MCF 10A (cell line): ENCODE measurements at regions of chr16 and their contacts with region 1.

Region 1: GRCh38 chr16:28211712-28212534 is at the start of gene XPO6:
- DNase-seq: peak; percentile 90
- H3K4me3 Mint-ChIP-seq: peak within 1 kb of the TSS; percentile 80
- H3K27ac Mint-ChIP-seq: no peak within 1 kb of the TSS
- H3K4me1 Mint-ChIP-seq: peaks cover 21% of the 10 kb centered on the region
- H3K27me3 Mint-ChIP-seq: no peaks in the 10 kb centered on the region
- CTCF ChIP-seq: no peak
- total RNA-seq, gene XPO6: 184 and 200 TPM in 2 replicates

Region 2: DNA sequence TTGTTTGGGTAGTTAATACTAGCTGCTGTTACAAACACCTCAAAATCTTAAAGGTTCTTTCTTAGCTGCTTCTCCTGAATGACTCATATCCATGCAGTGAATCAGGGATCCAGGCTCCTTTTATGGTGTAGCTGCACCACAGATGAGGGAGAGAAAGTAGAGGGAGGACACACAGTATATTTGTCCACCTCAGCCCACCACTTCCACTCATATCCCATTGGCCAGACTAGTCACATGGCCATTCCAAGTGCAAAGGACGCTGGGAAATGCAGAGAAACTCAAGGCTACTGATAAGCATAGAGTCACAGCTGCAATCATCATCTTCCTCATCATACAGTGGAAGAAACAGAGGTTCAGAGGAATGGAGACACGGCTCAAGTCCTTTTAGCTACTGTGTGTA is 212.2 kb before region 1 on chr16:
- CTCF ChIA-PET with region 1: no interaction called
- POLR2A ChIA-PET with region 1: no interaction called
- intact Hi-C with region 1: no loop called
- DNase-seq: no peak
- H3K4me3 Mint-ChIP-seq: no peak overlapping the region
- H3K27ac Mint-ChIP-seq: no peak overlapping the region
- H3K4me1 Mint-ChIP-seq: no peaks in the 10 kb centered on the region
- H3K27me3 Mint-ChIP-seq: no peaks in the 10 kb centered on the region
- CTCF ChIP-seq: no peak

Region 3: DNA sequence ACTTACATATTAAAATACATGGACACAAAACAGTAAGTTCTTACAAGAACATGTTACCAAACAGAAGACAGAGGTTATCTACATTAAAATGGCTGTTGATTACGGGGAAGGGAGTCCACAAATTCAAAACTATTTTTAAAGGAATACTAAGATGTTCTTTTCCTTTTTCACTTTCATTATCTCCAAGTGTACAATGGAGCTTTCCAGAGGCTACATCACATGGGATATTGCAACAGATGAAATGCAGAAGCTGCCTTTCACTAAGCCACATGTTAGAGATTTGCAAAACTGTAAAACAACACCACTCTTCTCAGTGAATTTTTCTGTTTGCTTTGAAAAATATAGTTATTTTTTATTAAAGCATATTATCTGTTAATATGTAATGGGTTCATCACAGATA is 53.8 kb before region 1 on chr16:
- CTCF ChIA-PET with region 1: no interaction called
- POLR2A ChIA-PET with region 1: interaction called, 3 read pairs
- intact Hi-C with region 1: loop called (anchors 10 kb)
- DNase-seq: no peak
- H3K4me3 Mint-ChIP-seq: no peak overlapping the region
- H3K27ac Mint-ChIP-seq: peak overlapping the region; percentile 28
- H3K4me1 Mint-ChIP-seq: peaks cover 4% of the 10 kb centered on the region
- H3K27me3 Mint-ChIP-seq: no peaks in the 10 kb centered on the region
- CTCF ChIP-seq: no peak

Region 4: GRCh38 chr16:28181515-28181914 is 30.4 kb before region 1 on chr16:
- CTCF ChIA-PET with region 1: no interaction called
- POLR2A ChIA-PET with region 1: interaction called, 10 read pairs
- intact Hi-C with region 1: no loop called
- DNase-seq: peak; percentile 94
- H3K4me3 Mint-ChIP-seq: no peak overlapping the region
- H3K27ac Mint-ChIP-seq: peak overlapping the region; percentile 62
- H3K4me1 Mint-ChIP-seq: peaks cover 31% of the 10 kb centered on the region
- H3K27me3 Mint-ChIP-seq: no peaks in the 10 kb centered on the region
- CTCF ChIP-seq: no peak

Region 5: DNA sequence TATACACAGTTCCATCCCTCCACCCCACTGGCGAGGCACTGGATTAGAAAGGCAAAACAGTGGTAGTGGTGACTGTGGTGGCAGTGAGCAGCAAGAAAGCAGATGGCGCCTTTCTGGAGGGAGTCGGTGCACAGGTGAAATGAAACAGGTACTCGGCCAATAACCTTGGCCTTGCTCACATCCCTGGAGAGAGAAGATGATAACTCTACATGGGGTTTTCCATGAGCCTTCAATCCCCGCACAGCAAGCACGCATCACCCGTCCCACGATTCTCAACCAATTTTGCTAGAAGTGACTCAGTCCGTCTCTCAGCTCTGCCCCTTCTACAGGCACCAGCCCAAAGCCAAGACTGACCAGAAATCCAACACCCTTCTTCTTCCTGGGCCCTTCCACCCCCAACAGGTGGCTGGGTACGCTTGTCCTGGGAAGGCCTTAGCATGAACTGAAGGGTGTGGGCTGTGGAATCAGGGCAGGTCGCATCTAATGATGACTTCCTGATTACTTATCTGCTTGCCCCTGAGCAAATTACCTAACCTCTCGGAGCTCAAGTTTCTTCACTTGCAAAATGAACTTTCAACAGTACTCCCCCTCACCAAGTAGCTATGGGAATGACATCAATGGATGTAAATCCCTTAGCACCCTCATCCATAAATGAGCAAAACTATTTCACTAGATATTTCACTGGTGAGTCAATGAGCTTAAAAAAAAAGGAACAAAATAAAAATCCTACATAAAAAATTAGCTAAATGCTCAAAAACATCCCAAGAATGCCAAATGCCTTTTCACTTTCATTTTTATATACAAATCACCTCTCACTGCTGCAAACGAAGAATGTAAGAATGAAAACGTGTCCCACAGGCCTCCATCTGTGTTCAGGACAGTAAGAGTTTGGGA is 18.1 kb before region 1 on chr16:
- CTCF ChIA-PET with region 1: interaction called, 16 read pairs
- POLR2A ChIA-PET with region 1: interaction called, 41 read pairs
- intact Hi-C with region 1: no loop called
- DNase-seq: peak; percentile 62
- H3K4me3 Mint-ChIP-seq: no peak overlapping the region
- H3K27ac Mint-ChIP-seq: peak overlapping the region; percentile 50
- H3K4me1 Mint-ChIP-seq: peaks cover 33% of the 10 kb centered on the region
- H3K27me3 Mint-ChIP-seq: no peaks in the 10 kb centered on the region
- CTCF ChIP-seq: no peak